ENCODE measurements at regions of chr3 and their contacts with region 1.

Region 1: GRCh38 chr3:151290673-151291072 is 12.3 kb upstream of the P2RY14 start:
- DNase-seq: peak; percentile 78
- ATAC-seq: peak; percentile 71
- H3K4me3 ChIP-seq: no peak overlapping the region
- H3K27ac ChIP-seq: no peak overlapping the region
- H3K4me1 ChIP-seq: no peaks in the 10 kb centered on the region
- H3K27me3 ChIP-seq: no peaks in the 10 kb centered on the region
- CTCF ChIP-seq: peak; percentile 91

Region 2: GRCh38 chr3:151197981-151198767 is 92.5 kb before region 1 on chr3:
- CTCF ChIA-PET with region 1: no interaction called
- POLR2A ChIA-PET with region 1: no interaction called
- intact Hi-C with region 1: no loop called
- DNase-seq: no peak
- ATAC-seq: no peak
- H3K4me3 ChIP-seq: no peak overlapping the region
- H3K27ac ChIP-seq: no peak overlapping the region
- H3K4me1 ChIP-seq: no peaks in the 10 kb centered on the region
- H3K27me3 ChIP-seq: no peaks in the 10 kb centered on the region
- CTCF ChIP-seq: no peak

Region 3: GRCh38 chr3:151305101-151305750 is 14.6 kb after region 1 on chr3:
- CTCF ChIA-PET with region 1: interaction called, 16 read pairs
- POLR2A ChIA-PET with region 1: interaction called, 3 read pairs
- intact Hi-C with region 1: loop called (anchors 1 kb)
- DNase-seq: peak; percentile 98
- ATAC-seq: peak; percentile 79
- H3K4me3 ChIP-seq: peak overlapping the region; percentile 62
- H3K27ac ChIP-seq: peak overlapping the region; percentile 95
- H3K4me1 ChIP-seq: peaks cover 84% of the 10 kb centered on the region
- H3K27me3 ChIP-seq: no peaks in the 10 kb centered on the region
- CTCF ChIP-seq: peak; percentile 43

Region 4: DNA sequence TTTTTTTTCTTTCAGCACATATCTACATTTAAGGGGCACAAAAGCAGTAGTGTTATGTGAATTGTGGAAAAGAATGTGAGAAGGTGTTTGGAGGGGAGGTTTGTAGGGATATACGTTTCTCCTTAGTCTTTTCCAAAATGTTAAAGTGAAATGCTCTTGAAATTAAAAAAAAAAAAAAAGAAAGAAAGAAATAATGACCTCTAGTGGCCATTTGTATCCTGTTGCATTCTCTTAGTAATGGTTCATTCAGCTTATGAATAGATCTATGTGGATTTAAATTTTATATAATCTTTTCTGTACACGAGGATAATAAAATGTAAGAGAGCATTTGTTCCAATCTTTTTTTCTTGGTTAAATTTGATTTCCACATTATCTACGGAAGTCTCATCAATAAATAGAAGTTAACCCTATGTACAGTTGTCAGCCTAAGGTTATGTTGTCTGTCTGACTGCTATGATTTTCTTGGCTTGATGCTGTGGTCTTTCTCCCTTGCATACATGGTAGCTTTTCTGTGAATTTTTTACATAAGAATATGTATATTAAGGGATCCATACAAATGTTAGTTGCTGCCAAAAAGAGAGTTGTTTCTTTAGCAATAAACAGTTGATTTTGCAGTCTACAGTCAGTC is 37.0 kb after region 1 on chr3:
- CTCF ChIA-PET with region 1: interaction called, 3 read pairs
- POLR2A ChIA-PET with region 1: no interaction called
- intact Hi-C with region 1: loop called (anchors 1 kb)
- DNase-seq: peak; percentile 64
- ATAC-seq: peak; percentile 68
- H3K4me3 ChIP-seq: no peak overlapping the region
- H3K27ac ChIP-seq: no peak overlapping the region
- H3K4me1 ChIP-seq: peaks cover 18% of the 10 kb centered on the region
- H3K27me3 ChIP-seq: no peaks in the 10 kb centered on the region
- CTCF ChIP-seq: peak; percentile 79

Region 5: GRCh38 chr3:151439652-151440129 is 149.0 kb after region 1 on chr3:
- CTCF ChIA-PET with region 1: interaction called, 8 read pairs
- POLR2A ChIA-PET with region 1: no interaction called
- intact Hi-C with region 1: loop called (anchors 1 kb)
- DNase-seq: peak; percentile 94
- ATAC-seq: peak; percentile 92
- H3K4me3 ChIP-seq: no peak overlapping the region
- H3K27ac ChIP-seq: no peak overlapping the region
- H3K4me1 ChIP-seq: peaks cover 29% of the 10 kb centered on the region
- H3K27me3 ChIP-seq: no peaks in the 10 kb centered on the region
- CTCF ChIP-seq: peak; percentile 91

Region 6: GRCh38 chr3:151918253-151919029 is 627.8 kb after region 1 on chr3:
- CTCF ChIA-PET with region 1: no interaction called
- POLR2A ChIA-PET with region 1: no interaction called
- intact Hi-C with region 1: loop called (anchors 2 kb)
- DNase-seq: peak; percentile 79
- ATAC-seq: peak; percentile 91
- H3K4me3 ChIP-seq: no peak overlapping the region
- H3K27ac ChIP-seq: no peak overlapping the region
- H3K4me1 ChIP-seq: peaks cover 8% of the 10 kb centered on the region
- H3K27me3 ChIP-seq: no peaks in the 10 kb centered on the region
- CTCF ChIP-seq: peak; percentile 85